ENCODE measurements at regions of chr20 and their contacts with region 1.

Region 1: DNA sequence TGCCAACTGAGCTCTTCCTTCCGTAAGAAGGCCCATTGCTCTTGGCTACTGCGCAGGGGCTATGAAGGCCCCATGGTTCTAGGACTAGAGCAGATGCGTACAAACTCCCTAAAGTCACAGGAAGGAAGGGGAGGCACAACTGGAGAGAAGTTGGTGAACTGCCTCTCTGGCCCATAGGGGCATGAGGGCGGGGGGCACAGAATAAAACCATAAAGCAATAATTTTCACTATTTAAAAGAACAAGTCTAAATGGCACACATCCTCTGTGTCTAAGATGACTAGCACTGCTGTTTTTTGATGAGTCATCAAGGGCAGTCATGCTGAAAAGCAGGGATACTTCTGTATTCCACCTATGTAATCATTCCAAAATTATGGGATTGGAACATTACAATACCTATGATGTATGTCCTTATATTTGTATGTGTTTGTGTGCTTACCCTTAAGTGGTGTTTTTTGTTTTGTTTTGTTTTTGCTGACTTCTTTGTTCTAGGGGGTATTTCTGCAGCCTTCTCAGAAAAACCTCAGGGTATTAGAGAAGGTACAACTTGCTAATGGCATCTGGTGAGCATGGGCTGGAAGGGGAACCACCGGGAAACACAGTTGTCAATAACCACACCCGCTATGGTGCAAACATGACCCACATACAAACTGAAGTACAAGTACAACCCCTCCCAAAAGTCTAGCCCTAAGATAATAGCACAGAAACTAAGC is 36.9 kb downstream of the B4GALT5 start:
- DNase-seq: peak; percentile 41
- H3K4me3 Mint-ChIP-seq: peak overlapping the region; percentile 35
- H3K27ac Mint-ChIP-seq: peak overlapping the region; percentile 73
- H3K4me1 Mint-ChIP-seq: peaks cover 70% of the 10 kb centered on the region
- H3K27me3 Mint-ChIP-seq: no peaks in the 10 kb centered on the region

Region 2: GRCh38 chr20:49534255-49534712 is 142.5 kb before region 1 on chr20:
- intact Hi-C with region 1: loop called (anchors 2 kb)
- DNase-seq: peak; percentile 56
- H3K4me3 Mint-ChIP-seq: peak overlapping the region; percentile 6
- H3K27ac Mint-ChIP-seq: peak overlapping the region; percentile 83
- H3K4me1 Mint-ChIP-seq: peaks cover 26% of the 10 kb centered on the region
- H3K27me3 Mint-ChIP-seq: peaks cover 3% of the 10 kb centered on the region

Region 3: GRCh38 chr20:49699200-49699992 is 22.7 kb after region 1 on chr20:
- intact Hi-C with region 1: loop called (anchors 2 kb)
- DNase-seq: no peak
- H3K4me3 Mint-ChIP-seq: no peak overlapping the region
- H3K27ac Mint-ChIP-seq: peak overlapping the region; percentile 30
- H3K4me1 Mint-ChIP-seq: peaks cover 53% of the 10 kb centered on the region
- H3K27me3 Mint-ChIP-seq: no peaks in the 10 kb centered on the region

Region 4: GRCh38 chr20:49713753-49714712 is 37.3 kb after region 1 on chr20 and contains the start of gene B4GALT5:
- intact Hi-C with region 1: loop called (anchors 5 kb)
- DNase-seq: peak; percentile 67
- H3K4me3 Mint-ChIP-seq: peak within 1 kb of the TSS; percentile 88
- H3K27ac Mint-ChIP-seq: peak within 1 kb of the TSS; percentile 87
- H3K4me1 Mint-ChIP-seq: peaks cover 34% of the 10 kb centered on the region
- H3K27me3 Mint-ChIP-seq: no peaks in the 10 kb centered on the region
- total RNA-seq, gene B4GALT5: 39.4 TPM in 2 replicates

Region 5: DNA sequence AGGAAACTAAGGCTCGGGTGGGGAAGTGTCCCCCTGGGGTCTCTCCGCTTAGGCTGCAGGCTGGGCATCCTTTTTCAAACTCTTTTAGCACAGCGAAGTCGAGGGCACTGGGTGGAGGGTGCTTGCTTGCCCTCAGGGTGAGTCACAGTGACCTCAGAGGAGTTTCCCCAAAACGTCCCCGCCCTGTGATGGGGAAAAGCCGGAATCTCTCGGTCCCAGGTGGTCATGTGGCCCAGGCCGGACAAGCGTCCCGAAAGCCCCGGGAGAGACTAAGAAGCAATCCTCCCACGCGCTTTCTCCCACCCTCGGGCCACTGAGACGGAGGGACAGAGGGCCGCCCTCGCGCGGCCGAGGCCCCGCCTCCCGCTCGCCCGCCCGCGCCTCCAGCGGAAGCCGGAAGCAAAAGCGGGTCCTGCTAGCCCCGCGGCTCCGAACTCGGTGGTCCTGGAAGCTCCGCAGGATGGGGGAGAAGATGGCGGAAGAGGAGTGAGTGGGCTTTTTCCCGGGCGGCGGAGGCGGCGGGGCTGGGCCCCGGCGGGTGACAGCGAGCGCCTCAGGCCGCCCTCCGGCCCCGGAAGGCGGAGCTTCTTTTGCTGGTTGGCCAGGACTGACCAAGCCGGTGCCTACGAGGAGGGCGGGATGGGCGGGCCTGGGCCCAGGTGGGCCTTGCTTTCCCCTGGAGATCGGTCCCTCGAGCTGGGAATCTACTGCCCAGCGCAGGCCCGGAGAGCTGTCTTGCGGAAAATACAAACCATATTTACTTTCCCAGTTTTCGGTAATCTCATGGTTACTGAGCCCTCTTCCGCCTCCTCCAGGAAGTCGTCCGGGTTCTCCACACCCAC is 135.9 kb after region 1 on chr20 and contains the start of gene SLC9A8:
- intact Hi-C with region 1: loop called (anchors 5 kb)
- DNase-seq: peak; percentile 75
- H3K4me3 Mint-ChIP-seq: peak within 1 kb of the TSS; percentile 92
- H3K27ac Mint-ChIP-seq: peak within 1 kb of the TSS; percentile 94
- H3K4me1 Mint-ChIP-seq: peaks cover 43% of the 10 kb centered on the region
- H3K27me3 Mint-ChIP-seq: no peaks in the 10 kb centered on the region
- total RNA-seq, gene SLC9A8: 16.4 and 18.7 TPM in 2 replicates

Measured in activated T-helper 2 cell treated with anti-CD3 and anti-CD28 coated beads, Interferon-gamma antibody, Interleukin-2, Interleukin-4, amounts not matched to agents 10 μg/mL and 5 μg/mL and 100 μg/mL, durations not matched to agents 14 hours and 24 hours and 36 hours (primary cell).